PC-9 (cell line): ENCODE measurements at regions of chr21 and their contacts with region 1.

Region 1: DNA sequence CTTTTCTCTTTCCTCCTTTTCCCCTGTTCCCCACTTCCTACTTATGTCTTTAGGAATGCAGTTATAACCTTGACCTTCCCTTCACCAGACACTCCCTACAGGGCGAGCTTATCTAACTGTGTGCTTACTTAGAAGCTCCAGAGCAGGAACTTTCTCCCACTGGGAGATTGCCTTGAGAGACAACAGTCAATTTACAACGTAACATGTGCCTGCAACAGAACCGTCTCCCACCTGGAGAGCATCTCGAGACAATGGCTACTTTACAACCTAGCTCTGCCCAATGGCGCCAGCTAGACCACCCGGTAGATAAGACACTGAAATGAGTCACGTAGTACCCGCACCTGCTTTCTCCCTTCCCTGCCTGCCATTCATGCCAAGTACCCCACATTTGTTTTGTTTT is 16.7 kb downstream of the HMGN1 start:
- DNase-seq: no peak
- H3K4me3 ChIP-seq: no peak overlapping the region
- H3K27ac ChIP-seq: no peak overlapping the region
- H3K4me1 ChIP-seq: no peaks in the 10 kb centered on the region
- H3K27me3 ChIP-seq: no peaks in the 10 kb centered on the region
- CTCF ChIP-seq: no peak

Region 2: GRCh38 chr21:39189857-39190604 is 142.1 kb before region 1 on chr21:
- CTCF ChIA-PET with region 1: no interaction called
- POLR2A ChIA-PET with region 1: interaction called, 11 read pairs
- intact Hi-C with region 1: no loop called
- DNase-seq: no peak
- H3K4me3 ChIP-seq: no peak overlapping the region
- H3K27ac ChIP-seq: no peak overlapping the region
- H3K4me1 ChIP-seq: no peaks in the 10 kb centered on the region
- H3K27me3 ChIP-seq: no peaks in the 10 kb centered on the region
- CTCF ChIP-seq: no peak

Region 3: DNA sequence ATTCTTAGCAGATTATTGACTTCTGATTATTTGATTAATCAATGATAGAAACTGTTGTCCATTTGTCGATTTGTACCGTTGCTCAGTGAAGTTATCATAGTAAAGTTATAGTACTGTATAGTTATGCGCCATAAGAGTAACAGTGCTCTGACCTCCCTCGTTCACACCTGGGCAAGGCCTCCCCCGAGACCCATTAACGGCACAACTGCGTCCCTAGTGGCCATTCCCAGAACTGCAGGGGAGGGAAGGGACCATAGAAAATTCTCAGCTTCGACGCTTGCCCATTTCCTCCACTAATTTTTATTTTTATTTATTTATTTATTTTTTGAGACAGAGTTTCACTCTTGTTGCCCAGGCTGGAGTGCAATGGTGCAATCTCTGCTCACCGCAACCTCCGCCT is 1180.4 kb after region 1 on chr21:
- CTCF ChIA-PET with region 1: no interaction called
- POLR2A ChIA-PET with region 1: no interaction called
- intact Hi-C with region 1: no loop called
- DNase-seq: peak in 1 of 2 experiments; percentile 1
- H3K4me3 ChIP-seq: no peak overlapping the region
- H3K27ac ChIP-seq: no peak overlapping the region
- H3K4me1 ChIP-seq: no peaks in the 10 kb centered on the region
- H3K27me3 ChIP-seq: no peaks in the 10 kb centered on the region
- CTCF ChIP-seq: peak; percentile 73